Right ventricle myocardium inferior (tissue), 1 donor: ENCODE measurements at regions of chr14 and their contacts with region 1.

Region 1: GRCh38 chr14:66425402-66425801 is 60.8 kb upstream of the CCDC196 start:
- DNase-seq: no peak
- ATAC-seq: peak; percentile 94

Region 2: DNA sequence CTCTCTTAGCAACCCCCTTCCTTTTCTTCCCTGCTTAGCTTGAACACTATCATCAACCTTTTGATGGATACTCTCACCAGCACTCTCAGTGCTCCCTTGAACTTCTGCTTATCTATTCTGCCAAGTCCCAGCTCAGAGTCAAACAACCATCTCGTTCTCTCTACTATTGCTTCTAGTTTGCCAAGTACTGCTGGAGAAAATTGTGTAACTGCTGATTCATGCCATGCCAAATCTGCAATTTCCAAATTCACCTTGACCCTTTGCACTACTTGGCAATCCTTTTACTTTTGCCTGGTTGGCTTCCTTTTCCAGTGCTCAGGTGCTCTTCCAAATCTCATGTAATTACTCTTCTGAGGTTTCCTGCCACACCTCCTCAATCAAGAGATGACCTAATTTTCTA is 57.9 kb after region 1 on chr14:
- intact Hi-C with region 1: loop called (anchors 5 kb)
- DNase-seq: no peak
- ATAC-seq: peak; percentile 87